HepG2 (cell line): ENCODE measurements at regions of chr2 and their contacts with region 1.

Region 1: GRCh38 chr2:102070058-102070642 is 72.4 kb upstream of the IL1R1 start:
- DNase-seq: peak; percentile 79
- ATAC-seq: peak; percentile 96
- H3K4me3 ChIP-seq: peak overlapping the region; percentile 2 to 51 (median 39); a peak in 5 of 6 replicates
- H3K27ac ChIP-seq: peak overlapping the region; percentile 83
- H3K4me1 ChIP-seq: peaks cover 77% of the 10 kb centered on the region
- H3K27me3 ChIP-seq: no peaks in the 10 kb centered on the region
- CTCF ChIP-seq: peak; percentile 80
- EP300 ChIP-seq: 0 out of 4 replicates have a peak, but pooled peaks of 1 of the 2 experiments have one; percentile 4
- POLR2A ChIP-seq: no peak
- RAD21 ChIP-seq: peak; percentile 73

Region 2: GRCh38 chr2:101509499-101510284 is 560.5 kb before region 1 on chr2:
- CTCF ChIA-PET with region 1: no interaction called
- POLR2A ChIA-PET with region 1: no interaction called
- in situ Hi-C with region 1: no loop called
- intact Hi-C with region 1: no loop called
- DNase-seq: no peak
- ATAC-seq: no peak
- H3K4me3 ChIP-seq: no peak overlapping the region
- H3K27ac ChIP-seq: no peak overlapping the region
- H3K4me1 ChIP-seq: no peaks in the 10 kb centered on the region
- H3K27me3 ChIP-seq: peaks cover 2 to 31% of the 10 kb centered on the region in 2 experiments; a peak in 4 of 5 replicates
- CTCF ChIP-seq: no peak
- EP300 ChIP-seq: no peak
- POLR2A ChIP-seq: no peak
- RAD21 ChIP-seq: no peak

Region 3: DNA sequence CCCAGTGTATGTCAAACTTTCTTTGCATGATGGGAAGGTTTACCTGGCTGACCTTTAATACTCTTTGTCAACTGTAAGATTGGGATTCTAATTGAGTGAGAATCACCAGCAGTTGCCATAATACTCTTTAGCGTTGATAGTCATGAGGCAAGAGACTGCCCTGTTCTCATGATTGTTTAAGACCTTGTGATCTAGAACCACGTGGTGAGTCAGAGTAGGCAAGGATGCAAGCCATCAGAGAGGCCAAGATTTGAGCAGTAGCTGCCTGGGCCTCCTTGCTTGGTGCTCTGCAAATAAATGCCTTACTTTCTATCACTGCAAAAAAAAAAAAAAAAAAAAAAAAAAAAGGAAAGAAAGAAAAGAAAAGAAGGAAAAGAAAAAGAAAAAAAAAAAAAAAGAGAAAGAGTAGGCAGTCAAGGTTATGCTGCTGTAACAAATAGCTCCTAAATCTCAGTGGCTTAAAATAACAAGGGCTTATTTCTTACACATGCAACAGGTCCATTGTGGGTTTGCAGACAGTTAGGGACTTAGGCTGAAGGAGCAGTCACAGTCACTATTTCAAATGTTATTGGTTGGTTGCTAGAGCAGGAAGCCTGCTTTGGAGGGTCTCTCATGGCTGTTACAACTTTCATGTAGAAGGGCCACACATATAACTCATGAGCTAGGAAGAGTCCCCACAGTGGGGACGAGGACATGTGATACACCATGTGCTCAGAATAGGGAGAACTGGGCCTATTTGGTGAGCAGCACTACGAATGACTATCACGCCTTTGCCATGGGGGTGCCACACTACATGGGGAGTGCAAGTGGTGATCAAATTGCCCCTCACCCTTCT is 56.7 kb before region 1 on chr2:
- CTCF ChIA-PET with region 1: no interaction called
- POLR2A ChIA-PET with region 1: no interaction called
- in situ Hi-C with region 1: no loop called
- intact Hi-C with region 1: no loop called
- DNase-seq: no peak
- ATAC-seq: no peak
- H3K4me3 ChIP-seq: no peak overlapping the region
- H3K27ac ChIP-seq: no peak overlapping the region
- H3K4me1 ChIP-seq: no peaks in the 10 kb centered on the region
- H3K27me3 ChIP-seq: no peaks in the 10 kb centered on the region
- CTCF ChIP-seq: no peak
- EP300 ChIP-seq: no peak
- POLR2A ChIP-seq: no peak
- RAD21 ChIP-seq: no peak

Region 4: DNA sequence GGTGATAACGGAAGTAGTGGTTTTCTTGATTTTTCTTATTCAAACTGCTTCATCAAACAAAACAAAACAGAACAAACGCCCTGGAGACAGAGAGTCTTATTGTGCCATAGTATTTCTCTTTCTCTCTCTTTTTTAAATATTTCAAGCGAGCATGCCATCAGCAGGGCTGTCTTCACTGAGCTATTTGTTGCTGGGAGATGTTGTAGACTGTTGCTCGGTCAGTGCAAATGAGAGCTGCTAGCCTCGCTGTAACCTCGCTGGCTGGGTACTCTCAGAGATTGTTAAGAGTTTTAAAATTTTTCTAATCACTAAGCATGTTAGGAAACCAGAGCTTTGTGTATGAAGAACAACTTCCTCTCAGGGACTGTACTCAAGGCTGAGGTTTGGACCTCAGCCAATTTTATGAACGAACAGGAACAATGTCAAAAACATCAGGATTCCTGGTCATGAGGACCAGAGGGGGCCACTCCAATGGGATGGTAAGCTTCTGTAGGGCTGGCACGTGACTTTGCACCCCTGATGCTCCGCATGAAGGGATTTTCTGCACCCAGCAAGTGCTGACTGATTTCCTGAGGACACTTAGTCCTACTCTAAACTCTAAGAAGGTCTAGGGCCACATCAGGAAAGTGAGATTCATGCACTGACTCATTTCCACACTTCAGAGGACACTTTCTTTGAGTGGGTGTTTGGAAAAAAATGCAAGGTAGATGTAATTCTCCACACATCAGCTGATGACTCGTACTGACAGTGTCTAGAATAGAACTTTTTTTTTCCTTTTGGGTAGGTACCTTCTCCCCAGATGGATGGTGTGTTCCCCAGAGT is 12.6 kb after region 1 on chr2:
- CTCF ChIA-PET with region 1: no interaction called
- POLR2A ChIA-PET with region 1: interaction called, 12 read pairs
- in situ Hi-C with region 1: no loop called
- intact Hi-C with region 1: no loop called
- DNase-seq: peak; percentile 67
- ATAC-seq: peak; percentile 77
- H3K4me3 ChIP-seq: no peak overlapping the region
- H3K27ac ChIP-seq: peak overlapping the region; percentile 28
- H3K4me1 ChIP-seq: peaks cover 34% of the 10 kb centered on the region
- H3K27me3 ChIP-seq: no peaks in the 10 kb centered on the region
- CTCF ChIP-seq: no peak
- EP300 ChIP-seq: peak in 1 of 2 experiments; percentile 27; a peak in 1 of 4 replicates
- POLR2A ChIP-seq: no peak
- RAD21 ChIP-seq: no peak

Region 5: DNA sequence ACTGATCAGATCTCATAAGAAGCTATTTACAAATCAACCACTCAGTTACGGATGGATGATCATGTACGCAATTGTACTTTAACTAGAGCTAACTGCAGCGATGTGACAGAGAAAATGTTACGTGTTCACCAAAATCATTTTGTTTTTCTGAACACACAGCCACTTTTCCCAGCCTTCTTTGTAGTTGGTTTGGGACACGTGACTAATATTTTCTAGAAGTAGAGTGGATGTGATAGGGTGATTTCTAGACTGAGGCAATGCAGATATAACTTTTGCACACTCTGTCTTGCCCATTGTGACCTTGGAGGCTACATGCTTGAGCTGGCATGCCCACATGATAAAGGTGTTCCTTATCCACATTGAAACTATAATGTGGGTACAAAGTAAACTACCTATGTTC is 393.0 kb after region 1 on chr2:
- CTCF ChIA-PET with region 1: no interaction called
- POLR2A ChIA-PET with region 1: no interaction called
- in situ Hi-C with region 1: no loop called
- intact Hi-C with region 1: no loop called
- DNase-seq: no peak
- ATAC-seq: no peak
- H3K4me3 ChIP-seq: no peak overlapping the region
- H3K27ac ChIP-seq: no peak overlapping the region
- H3K4me1 ChIP-seq: no peaks in the 10 kb centered on the region
- H3K27me3 ChIP-seq: no peaks in the 10 kb centered on the region; a peak in 1 of 5 replicates
- CTCF ChIP-seq: no peak
- EP300 ChIP-seq: no peak
- POLR2A ChIP-seq: no peak
- RAD21 ChIP-seq: no peak